PC-9 (cell line): ENCODE measurements at regions of chr11 and their contacts with region 1.

Region 1: DNA sequence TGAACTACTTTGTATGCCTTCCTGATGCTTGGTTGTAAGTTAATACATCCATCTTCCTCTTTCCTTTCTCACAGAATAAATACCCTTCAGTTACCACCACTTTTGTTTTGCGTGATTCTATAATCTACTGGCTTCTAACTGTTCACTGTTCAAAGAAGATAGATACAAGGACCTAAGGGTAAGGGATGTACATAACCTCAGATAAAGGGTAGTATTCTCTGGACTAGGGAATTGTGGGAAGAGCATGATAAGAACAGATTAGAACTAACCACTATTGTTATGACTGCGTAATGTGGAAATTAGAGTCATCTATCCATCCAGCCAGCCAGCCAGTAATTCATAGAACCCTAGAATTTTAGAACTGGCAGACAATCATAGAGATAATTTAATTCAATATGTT is 36.4 kb downstream of the MAP6 start:
- DNase-seq: no peak
- H3K4me3 ChIP-seq: no peak overlapping the region
- H3K27ac ChIP-seq: no peak overlapping the region
- H3K4me1 ChIP-seq: no peaks in the 10 kb centered on the region
- H3K27me3 ChIP-seq: no peaks in the 10 kb centered on the region
- CTCF ChIP-seq: no peak

Region 2: GRCh38 chr11:75270896-75271418 is 361.5 kb before region 1 on chr11:
- CTCF ChIA-PET with region 1: interaction called, 10 read pairs
- POLR2A ChIA-PET with region 1: no interaction called
- intact Hi-C with region 1: no loop called
- DNase-seq: no peak
- H3K4me3 ChIP-seq: no peak overlapping the region
- H3K27ac ChIP-seq: no peak overlapping the region
- H3K4me1 ChIP-seq: no peaks in the 10 kb centered on the region
- H3K27me3 ChIP-seq: no peaks in the 10 kb centered on the region
- CTCF ChIP-seq: peak; percentile 68; the same call in 1 of the 2 replicates

Region 3: DNA sequence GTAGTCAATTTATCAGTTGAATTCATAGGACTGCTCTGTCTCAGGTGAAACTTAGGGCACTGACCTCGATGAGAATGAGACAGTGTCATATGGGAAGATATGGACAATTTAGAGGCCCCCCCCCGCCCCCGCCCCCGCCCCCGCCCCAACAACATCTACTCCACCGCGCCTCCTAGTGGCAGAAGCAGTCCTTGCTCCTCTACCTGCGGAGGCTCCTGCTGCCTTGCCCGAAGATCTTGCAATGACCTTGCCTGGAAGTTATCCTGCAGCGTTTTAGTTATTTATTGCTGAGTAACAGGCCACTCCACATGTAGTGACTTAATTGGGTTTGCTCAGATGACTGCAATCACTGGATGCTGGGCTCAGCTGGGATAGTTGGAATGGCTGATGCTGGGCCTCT is 55.2 kb before region 1 on chr11:
- CTCF ChIA-PET with region 1: no interaction called
- POLR2A ChIA-PET with region 1: no interaction called
- intact Hi-C with region 1: no loop called
- DNase-seq: peak in 1 of 2 experiments; percentile 29
- H3K4me3 ChIP-seq: no peak overlapping the region
- H3K27ac ChIP-seq: no peak overlapping the region
- H3K4me1 ChIP-seq: peaks cover 7% of the 10 kb centered on the region
- H3K27me3 ChIP-seq: no peaks in the 10 kb centered on the region
- CTCF ChIP-seq: peak; percentile 60; the same call in 1 of the 2 replicates